ENCODE measurements at regions of chr14 and their contacts with region 1.

Region 1: DNA sequence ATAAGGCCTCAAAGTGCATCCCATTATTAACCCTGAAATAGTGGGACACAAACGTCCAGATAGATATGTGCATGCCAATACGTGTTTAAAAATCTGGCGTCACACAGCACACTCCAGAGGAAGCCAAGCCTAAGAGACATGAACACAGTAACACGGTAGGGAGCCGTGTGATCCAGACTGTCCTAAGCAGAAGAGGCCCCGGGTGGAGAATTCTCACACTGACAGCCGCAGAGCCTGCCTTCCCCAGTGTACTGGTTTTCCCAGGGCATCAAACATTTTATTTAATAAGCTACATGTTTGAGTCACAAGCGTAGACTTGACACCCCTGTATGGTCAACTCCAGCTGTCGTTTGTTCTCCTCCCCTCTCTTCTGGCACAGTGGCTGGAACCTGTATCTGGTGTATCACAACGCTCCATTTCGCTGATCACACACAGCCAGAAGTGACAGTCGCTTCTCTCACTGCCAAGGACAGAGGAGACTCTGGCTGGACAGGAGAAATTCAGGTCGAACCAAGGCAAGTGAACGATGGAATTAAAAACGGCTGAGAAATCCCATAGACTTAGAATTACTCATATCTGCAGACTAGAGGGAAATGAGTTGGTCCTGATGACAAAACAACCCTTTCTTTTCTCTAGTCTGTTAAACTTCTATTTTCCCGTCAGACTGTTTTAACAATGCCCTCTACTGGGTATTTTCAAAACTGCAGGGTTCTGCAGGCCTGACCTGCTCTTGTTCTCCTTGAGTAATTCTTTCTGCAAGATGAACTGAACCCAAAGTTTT is 359.9 kb downstream of the RGS6 start:
- DNase-seq: peak; percentile 63
- H3K4me3 ChIP-seq: no peak overlapping the region
- H3K27ac ChIP-seq: no peak overlapping the region
- H3K4me1 ChIP-seq: no peaks in the 10 kb centered on the region
- H3K27me3 ChIP-seq: no peaks in the 10 kb centered on the region
- CTCF ChIP-seq: peak; percentile 78

Region 2: GRCh38 chr14:71720978-71721624 is 571.0 kb before region 1 on chr14:
- CTCF ChIA-PET with region 1: no interaction called
- POLR2A ChIA-PET with region 1: no interaction called
- intact Hi-C with region 1: loop called (anchors 10 kb)
- DNase-seq: peak; percentile 86
- H3K4me3 ChIP-seq: no peak overlapping the region
- H3K27ac ChIP-seq: no peak overlapping the region
- H3K4me1 ChIP-seq: peaks cover 26% of the 10 kb centered on the region
- H3K27me3 ChIP-seq: no peaks in the 10 kb centered on the region
- CTCF ChIP-seq: peak; percentile 78

Region 3: DNA sequence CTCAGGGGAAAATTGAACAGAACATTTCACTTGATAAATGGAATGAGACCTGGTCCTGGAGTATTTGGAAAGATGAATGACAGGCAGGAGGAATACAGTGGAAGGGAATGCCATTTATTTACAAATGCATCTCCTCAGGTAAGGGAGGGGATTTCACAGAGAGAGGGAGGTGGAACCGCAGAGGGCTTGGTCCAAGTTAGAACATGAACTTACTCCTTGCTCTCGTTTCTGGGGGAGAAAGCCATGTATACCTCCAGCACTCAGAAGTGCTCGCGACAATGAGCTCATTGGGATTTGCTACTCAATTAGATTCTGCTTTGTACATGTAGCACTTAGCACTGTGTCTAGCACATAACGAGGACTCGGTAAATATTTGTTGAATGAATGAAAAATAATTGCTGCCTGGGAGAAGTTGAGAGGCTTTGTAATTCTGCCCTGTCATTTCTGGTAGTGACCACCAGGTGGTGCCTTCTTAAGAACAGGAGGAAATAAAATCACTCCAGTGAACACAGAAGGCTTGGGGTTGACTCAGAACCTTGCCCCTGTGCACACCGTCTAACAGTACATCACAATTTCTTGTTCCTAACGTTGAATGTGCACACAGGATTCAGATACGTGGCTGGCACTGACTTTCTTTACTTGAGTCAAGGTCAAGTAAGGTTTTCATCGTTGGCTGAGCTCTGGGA is 268.2 kb before region 1 on chr14:
- CTCF ChIA-PET with region 1: no interaction called
- POLR2A ChIA-PET with region 1: no interaction called
- intact Hi-C with region 1: loop called (anchors 5 kb)
- DNase-seq: peak; percentile 64
- H3K4me3 ChIP-seq: no peak overlapping the region
- H3K27ac ChIP-seq: no peak overlapping the region
- H3K4me1 ChIP-seq: no peaks in the 10 kb centered on the region
- H3K27me3 ChIP-seq: no peaks in the 10 kb centered on the region
- CTCF ChIP-seq: peak; percentile 77

Region 4: GRCh38 chr14:72256056-72256455 is 36.0 kb before region 1 on chr14:
- CTCF ChIA-PET with region 1: no interaction called
- POLR2A ChIA-PET with region 1: no interaction called
- intact Hi-C with region 1: no loop called
- DNase-seq: no peak
- H3K4me3 ChIP-seq: no peak overlapping the region
- H3K27ac ChIP-seq: no peak overlapping the region
- H3K4me1 ChIP-seq: no peaks in the 10 kb centered on the region
- H3K27me3 ChIP-seq: no peaks in the 10 kb centered on the region
- CTCF ChIP-seq: no peak

Region 5: GRCh38 chr14:72341237-72341636 is 49.1 kb after region 1 on chr14:
- CTCF ChIA-PET with region 1: no interaction called
- POLR2A ChIA-PET with region 1: no interaction called
- intact Hi-C with region 1: no loop called
- DNase-seq: no peak
- H3K4me3 ChIP-seq: no peak overlapping the region
- H3K27ac ChIP-seq: no peak overlapping the region
- H3K4me1 ChIP-seq: no peaks in the 10 kb centered on the region
- H3K27me3 ChIP-seq: no peaks in the 10 kb centered on the region
- CTCF ChIP-seq: no peak